Panc1 (cell line): ENCODE measurements at regions of chr11 and their contacts with region 1.

Region 1: GRCh38 chr11:134098566-134099184 is 29.8 kb downstream of the JAM3 start:
- DNase-seq: peak; percentile 5
- ATAC-seq: peak; percentile 96
- H3K4me3 ChIP-seq: no peak overlapping the region
- H3K27ac ChIP-seq: no peak overlapping the region
- H3K4me1 ChIP-seq: no peaks in the 10 kb centered on the region
- H3K27me3 ChIP-seq: no peaks in the 10 kb centered on the region
- CTCF ChIP-seq: peak; percentile 78

Region 2: DNA sequence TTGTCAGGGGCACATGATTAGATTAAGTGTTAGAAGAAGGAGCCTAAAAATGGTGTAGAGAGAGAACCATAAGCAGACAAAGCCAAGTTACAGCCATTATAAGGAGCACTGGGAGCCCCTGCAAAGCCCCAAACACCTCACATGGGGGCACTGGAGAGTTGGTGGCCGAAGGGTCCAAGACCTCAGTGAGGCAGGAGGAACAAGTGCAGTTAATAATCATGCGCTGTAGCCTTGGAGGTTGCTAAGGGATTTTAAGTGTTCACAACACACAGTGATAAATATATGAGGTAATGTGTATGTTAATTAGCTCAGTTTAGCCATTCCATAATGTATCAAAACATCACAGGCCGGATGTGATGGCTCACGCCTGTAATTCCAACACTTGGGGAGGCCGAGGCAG is 84.2 kb before region 1 on chr11:
- CTCF ChIA-PET with region 1: interaction called, 13 read pairs
- POLR2A ChIA-PET with region 1: no interaction called
- in situ Hi-C with region 1: no loop called
- intact Hi-C with region 1: no loop called
- DNase-seq: no peak
- ATAC-seq: no peak
- H3K4me3 ChIP-seq: no peak overlapping the region
- H3K27ac ChIP-seq: no peak overlapping the region
- H3K4me1 ChIP-seq: no peaks in the 10 kb centered on the region
- H3K27me3 ChIP-seq: peaks cover 48% of the 10 kb centered on the region
- CTCF ChIP-seq: no peak